H1 (cell line): ENCODE measurements at regions of chr11 and their contacts with region 1.

Region 1: DNA sequence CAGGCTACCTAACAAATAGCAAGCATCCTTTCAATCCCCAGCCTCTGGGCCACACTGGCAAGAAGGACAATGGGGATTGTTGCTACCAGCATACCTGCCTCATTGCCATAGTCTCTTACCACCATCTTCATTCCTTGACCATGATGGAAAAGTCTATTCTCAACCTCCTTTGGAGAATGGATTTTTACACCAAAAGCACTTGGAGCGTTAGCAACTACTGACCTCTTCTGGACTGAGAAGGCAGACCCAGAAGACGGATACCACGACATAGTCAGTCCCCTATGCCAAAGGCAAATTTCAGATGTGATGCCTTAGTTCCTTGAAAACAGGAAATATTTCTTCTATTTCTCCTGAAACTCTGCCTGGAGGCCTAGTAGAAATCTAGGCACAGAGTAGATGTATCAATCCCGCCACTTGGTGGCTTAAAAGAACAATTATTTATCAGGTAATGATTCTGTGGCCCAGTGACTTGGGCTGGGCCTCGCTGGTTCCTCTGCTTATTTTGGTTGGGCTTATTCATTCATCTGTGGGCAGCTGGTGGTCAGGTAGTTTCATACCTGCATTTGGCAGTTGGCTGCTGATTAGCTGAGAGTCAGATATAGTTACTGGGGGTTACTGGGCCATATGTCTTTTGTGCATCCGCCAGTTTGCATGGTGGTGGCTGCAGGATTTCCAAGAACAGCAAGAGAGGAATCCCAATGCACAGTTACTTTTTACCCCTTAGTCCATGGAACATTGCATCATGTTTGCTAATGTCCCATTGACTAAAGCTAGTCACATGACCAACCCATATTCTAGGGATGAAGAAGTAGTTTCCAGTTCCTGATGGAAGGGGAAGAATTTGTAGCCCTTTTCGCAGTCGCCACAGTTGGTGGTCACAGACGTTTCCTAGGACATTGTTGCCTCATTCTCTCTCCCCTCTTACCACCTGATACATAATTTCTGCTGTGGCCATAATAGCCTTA is 75.2 kb downstream of the DHCR7 start:
- DNase-seq: no peak
- H3K4me3 ChIP-seq: no peak overlapping the region
- H3K27ac ChIP-seq: no peak overlapping the region
- H3K4me1 ChIP-seq: peaks cover 0 to 4% (median 3%) of the 10 kb centered on the region in 4 experiments; a peak in 2 of 7 replicates
- H3K27me3 ChIP-seq: no peaks in the 10 kb centered on the region; a peak in 3 of 7 replicates
- CTCF ChIP-seq: peak; percentile 17 to 54 (median 44)
- EP300 ChIP-seq: no peak
- POLR2A ChIP-seq: no peak
- RAD21 ChIP-seq: peak; percentile 72 to 79

Region 2: GRCh38 chr11:71086675-71087258 is 286.2 kb before region 1 on chr11:
- CTCF ChIA-PET with region 1: interaction called, 15 read pairs
- POLR2A ChIA-PET with region 1: no interaction called
- DNase-seq: peak; percentile 31 to 78
- H3K4me3 ChIP-seq: no peak overlapping the region
- H3K27ac ChIP-seq: no peak overlapping the region
- H3K4me1 ChIP-seq: no peaks in the 10 kb centered on the region
- H3K27me3 ChIP-seq: no peaks in the 10 kb centered on the region
- CTCF ChIP-seq: peak; percentile 67 to 84 (median 78)
- EP300 ChIP-seq: no peak
- POLR2A ChIP-seq: no peak
- RAD21 ChIP-seq: peak; percentile 77 to 80

Region 3: GRCh38 chr11:71120490-71120896 is 252.5 kb before region 1 on chr11:
- CTCF ChIA-PET with region 1: interaction called, 17 read pairs
- POLR2A ChIA-PET with region 1: no interaction called
- DNase-seq: peak; percentile 73 to 78
- H3K4me3 ChIP-seq: no peak overlapping the region
- H3K27ac ChIP-seq: no peak overlapping the region
- H3K4me1 ChIP-seq: peaks cover 0 to 6% (median 3%) of the 10 kb centered on the region in 4 experiments; a peak in 6 of 7 replicates
- H3K27me3 ChIP-seq: no peaks in the 10 kb centered on the region
- CTCF ChIP-seq: peak; percentile 79 to 92 (median 86)
- EP300 ChIP-seq: no peak
- POLR2A ChIP-seq: no peak
- RAD21 ChIP-seq: peak; percentile 96 to 97

Region 4: DNA sequence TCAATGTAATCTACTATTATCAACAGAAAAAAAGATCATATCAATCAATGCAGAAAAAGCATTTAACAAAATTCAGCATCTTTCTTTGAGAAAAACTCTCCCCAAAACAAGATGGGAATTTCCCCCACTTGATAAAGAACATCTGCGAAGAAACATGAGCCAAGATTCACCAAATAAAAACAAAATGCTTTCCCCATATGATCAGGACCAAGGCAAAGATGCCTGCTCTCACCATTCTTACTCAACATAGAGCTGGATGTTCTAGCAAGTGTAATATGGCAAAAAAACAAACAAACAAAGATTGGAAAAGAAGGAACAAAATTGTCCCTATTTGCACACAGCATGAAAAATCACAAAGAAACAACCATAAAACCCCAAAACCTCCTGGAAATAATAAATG is 144.0 kb before region 1 on chr11:
- CTCF ChIA-PET with region 1: no interaction called
- POLR2A ChIA-PET with region 1: no interaction called
- DNase-seq: no peak
- H3K4me3 ChIP-seq: no peak overlapping the region
- H3K27ac ChIP-seq: no peak overlapping the region
- H3K4me1 ChIP-seq: peaks cover 0 to 4% (median 3%) of the 10 kb centered on the region in 4 experiments; a peak in 3 of 7 replicates
- H3K27me3 ChIP-seq: no peaks in the 10 kb centered on the region
- CTCF ChIP-seq: no peak
- EP300 ChIP-seq: no peak
- POLR2A ChIP-seq: no peak
- RAD21 ChIP-seq: no peak

Region 5: GRCh38 chr11:71385091-71385490 is 12.1 kb after region 1 on chr11:
- CTCF ChIA-PET with region 1: interaction called, 14 read pairs
- POLR2A ChIA-PET with region 1: no interaction called
- DNase-seq: no peak
- H3K4me3 ChIP-seq: no peak overlapping the region
- H3K27ac ChIP-seq: no peak overlapping the region
- H3K4me1 ChIP-seq: no peaks in the 10 kb centered on the region
- H3K27me3 ChIP-seq: no peaks in the 10 kb centered on the region
- CTCF ChIP-seq: no peak
- EP300 ChIP-seq: no peak
- POLR2A ChIP-seq: no peak
- RAD21 ChIP-seq: no peak

Region 6: GRCh38 chr11:71551711-71552110 is 178.7 kb after region 1 on chr11:
- CTCF ChIA-PET with region 1: no interaction called
- POLR2A ChIA-PET with region 1: no interaction called
- DNase-seq: no peak
- H3K4me3 ChIP-seq: no peak overlapping the region
- H3K27ac ChIP-seq: no peak overlapping the region
- H3K4me1 ChIP-seq: 0 out of 7 replicates have a peak, but pooled peaks cover 0 to 2% (median 0%) of the 10 kb centered on the region in 4 experiments
- H3K27me3 ChIP-seq: no peaks in the 10 kb centered on the region
- CTCF ChIP-seq: no peak
- EP300 ChIP-seq: no peak
- POLR2A ChIP-seq: no peak
- RAD21 ChIP-seq: no peak